Ovary (tissue), 10 donors: ENCODE measurements at regions of chr6 and their contacts with region 1.

Region 1: DNA sequence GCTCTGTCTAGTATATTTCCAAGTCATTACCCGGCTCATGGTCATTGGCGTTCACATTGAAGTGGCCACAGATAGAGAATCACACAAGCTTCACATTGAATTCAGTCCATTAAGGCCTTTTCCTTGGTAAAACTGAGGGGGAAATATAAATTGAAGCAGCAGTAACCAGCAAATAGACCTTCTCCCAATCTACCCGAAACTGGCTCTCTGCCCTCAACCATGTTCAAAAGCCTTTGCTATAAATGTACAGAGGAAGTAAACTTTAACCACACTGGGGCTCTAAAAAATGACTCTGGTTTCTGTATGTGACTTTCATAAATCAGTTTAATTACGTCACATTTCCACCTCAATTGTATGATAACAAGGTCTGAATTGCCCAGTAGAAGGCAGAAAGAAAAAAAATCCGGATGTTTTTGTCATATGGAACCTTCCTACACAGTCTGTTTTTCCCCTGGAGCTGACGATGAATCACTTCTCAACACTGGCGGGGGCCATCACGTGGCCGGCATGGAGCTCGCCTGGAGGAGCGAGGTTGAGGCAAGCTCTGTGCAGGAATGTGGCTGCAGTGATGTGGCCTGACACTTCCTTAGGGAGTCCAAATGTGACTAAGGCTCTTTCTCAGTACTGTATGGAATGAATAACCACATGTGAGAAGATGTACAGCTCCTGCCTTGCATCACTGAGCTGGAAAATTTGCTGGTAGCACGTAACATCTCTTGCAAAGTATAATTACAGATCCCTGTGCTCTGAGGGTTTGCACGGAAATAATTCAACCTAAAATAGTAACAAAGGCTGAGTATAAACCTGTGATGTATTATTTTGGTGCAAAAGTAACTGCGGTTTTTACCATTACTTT is 58.6 kb upstream of the SNX9 start:
- DNase-seq: peak; percentile 55 to 72 (median 68)
- H3K4me3 ChIP-seq: no peak overlapping the region
- H3K27ac ChIP-seq: peak overlapping the region in 1 of 2 donors; percentile 7
- H3K4me1 ChIP-seq: peaks cover 10% of the 10 kb centered on the region
- H3K27me3 ChIP-seq: no peaks in the 10 kb centered on the region
- CTCF ChIP-seq: no peak
- EP300 ChIP-seq: no peak
- POLR2A ChIP-seq: no peak

Region 2: GRCh38 chr6:157339432-157339831 is 425.0 kb before region 1 on chr6:
- intact Hi-C with region 1: no loop called
- DNase-seq: no peak
- H3K4me3 ChIP-seq: no peak overlapping the region
- H3K27ac ChIP-seq: no peak overlapping the region
- H3K4me1 ChIP-seq: no peaks in the 10 kb centered on the region
- H3K27me3 ChIP-seq: no peaks in the 10 kb centered on the region
- CTCF ChIP-seq: no peak
- EP300 ChIP-seq: no peak
- POLR2A ChIP-seq: no peak

Region 3: GRCh38 chr6:157867155-157867559 is 102.8 kb after region 1 on chr6:
- intact Hi-C with region 1: loop called in 1 of 4 experiments (anchors 10 kb)
- DNase-seq: peak in 1 of 5 donors; percentile 14
- H3K4me3 ChIP-seq: peak overlapping the region; percentile 8
- H3K27ac ChIP-seq: no peak overlapping the region
- H3K4me1 ChIP-seq: peaks cover 1% of the 10 kb centered on the region
- H3K27me3 ChIP-seq: no peaks in the 10 kb centered on the region
- CTCF ChIP-seq: no peak
- EP300 ChIP-seq: no peak
- POLR2A ChIP-seq: no peak

Region 4: DNA sequence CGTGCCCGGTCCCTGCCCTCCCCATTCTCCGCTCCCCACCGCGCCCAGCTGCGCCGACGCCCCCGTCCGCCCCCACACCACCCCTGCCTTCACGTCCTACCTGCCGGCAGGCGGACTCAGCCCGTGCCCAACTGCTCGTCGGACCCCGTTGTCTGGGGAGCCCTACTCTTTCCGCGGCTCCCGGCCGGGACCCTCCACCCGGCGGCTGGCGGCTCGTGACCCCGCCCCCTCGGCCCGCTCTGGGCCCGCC is 403.6 kb after region 1 on chr6 and contains the start of gene SERAC1:
- intact Hi-C with region 1: no loop called
- DNase-seq: no peak
- H3K4me3 ChIP-seq: peak within 1 kb of the TSS; percentile 69
- H3K27ac ChIP-seq: peak within 1 kb of the TSS; percentile 84 to 94
- H3K4me1 ChIP-seq: peaks cover 5% of the 10 kb centered on the region
- H3K27me3 ChIP-seq: no peaks in the 10 kb centered on the region
- CTCF ChIP-seq: no peak
- EP300 ChIP-seq: no peak
- POLR2A ChIP-seq: no peak
- total RNA-seq, gene SERAC1: 3.9 to 11.9 (median 6.3) TPM